OCI-LY7 (cell line): ENCODE measurements at regions of chr12 and their contacts with region 1.

Region 1: DNA sequence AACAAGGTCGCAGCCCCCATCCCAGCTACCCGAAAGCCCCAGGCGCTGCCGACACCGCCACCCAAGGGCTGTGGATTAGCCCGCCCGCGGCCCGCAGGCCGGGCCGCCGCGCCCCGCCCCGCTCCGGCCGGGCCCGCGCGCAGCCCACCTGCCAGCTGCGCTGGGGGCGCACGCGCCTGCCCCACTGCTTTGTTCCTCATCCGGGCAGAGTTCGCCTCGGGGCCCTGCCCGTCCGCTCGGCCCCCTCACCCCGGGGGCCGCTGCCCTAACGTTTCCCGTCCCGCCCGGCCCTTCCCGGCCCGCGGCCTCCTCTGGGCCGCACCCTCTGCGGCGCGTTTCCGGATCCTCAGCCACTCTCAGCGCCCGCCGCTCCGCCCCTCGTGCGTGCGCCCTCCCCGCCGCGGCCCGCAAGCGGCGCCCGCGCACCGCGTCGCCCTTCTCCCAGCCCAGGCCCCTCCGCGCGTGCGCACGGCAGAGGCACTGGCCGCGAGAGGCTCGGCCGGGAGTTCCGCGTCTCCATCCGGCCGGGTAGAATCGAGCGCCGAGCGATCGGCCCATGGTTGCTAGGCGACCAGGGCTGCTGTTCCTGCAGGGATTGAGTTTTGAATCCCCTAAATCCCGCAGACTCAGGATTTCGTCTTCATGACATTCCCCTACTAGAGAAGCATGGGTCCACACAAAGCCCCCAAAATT is at the start of gene PRDM4:
- DNase-seq: peak; percentile 95
- H3K4me3 ChIP-seq: peak within 1 kb of the TSS; percentile 92
- H3K27ac ChIP-seq: peak within 1 kb of the TSS; percentile 20
- H3K4me1 ChIP-seq: peaks cover 24% of the 10 kb centered on the region
- CTCF ChIP-seq: peak; percentile 48
- total RNA-seq, gene PRDM4: 25.1 and 28.7 TPM in 2 replicates

Region 2: DNA sequence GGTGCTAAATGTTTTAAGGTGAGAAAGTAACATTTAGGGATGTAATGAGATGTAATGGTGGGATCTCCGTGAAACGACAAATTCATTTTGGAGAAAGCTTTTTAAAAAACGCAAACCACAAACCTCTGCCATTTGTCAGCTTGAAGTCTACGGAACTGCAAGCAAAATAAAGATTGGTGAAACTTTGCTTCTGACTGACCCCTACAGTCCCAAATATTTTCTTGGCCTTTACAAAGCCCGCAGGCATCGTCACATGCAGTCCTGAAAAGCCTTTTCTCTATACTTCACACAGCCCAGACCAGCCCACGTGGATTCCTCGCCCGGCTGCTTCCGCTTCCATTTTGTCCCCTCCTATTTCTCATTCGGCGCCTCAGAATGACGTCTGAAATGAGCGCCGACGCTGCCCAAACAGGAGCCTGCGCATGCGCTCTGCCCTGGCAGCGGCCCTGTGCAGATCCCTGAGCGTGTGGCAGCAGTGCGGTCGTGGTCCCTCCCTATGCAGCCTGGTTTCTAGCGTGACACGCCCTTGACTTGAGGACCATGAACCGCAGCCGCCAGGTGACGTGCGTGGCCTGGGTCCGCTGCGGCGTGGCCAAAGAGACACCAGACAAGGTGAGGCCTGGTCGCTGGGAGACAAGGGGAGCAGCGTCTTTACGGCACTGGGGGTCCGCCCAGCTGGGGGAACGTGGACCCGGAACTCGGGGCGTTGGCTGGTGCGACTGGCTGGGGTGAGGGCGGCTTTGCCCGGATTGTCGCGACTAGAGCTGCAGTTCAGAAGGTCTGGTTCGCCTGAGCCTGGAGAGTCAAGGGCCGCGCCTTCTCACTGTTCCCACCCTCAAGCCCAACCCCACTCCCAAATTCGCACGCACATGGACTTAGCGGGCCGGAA is 75.4 kb before region 1 on chr12 and contains the start of gene PWP1:
- CTCF ChIA-PET with region 1: no interaction called
- POLR2A ChIA-PET with region 1: no interaction called
- intact Hi-C with region 1: loop called (anchors 5 kb)
- DNase-seq: peak; percentile 97
- H3K4me3 ChIP-seq: peak within 1 kb of the TSS; percentile 95
- H3K27ac ChIP-seq: peak within 1 kb of the TSS; percentile 44
- H3K4me1 ChIP-seq: peaks cover 19% of the 10 kb centered on the region
- CTCF ChIP-seq: no peak
- total RNA-seq, gene PWP1: 28.2 and 46.1 TPM in 2 replicates

Region 3: GRCh38 chr12:107736914-107737313 is 24.0 kb before region 1 on chr12:
- CTCF ChIA-PET with region 1: no interaction called
- POLR2A ChIA-PET with region 1: interaction called, 3 read pairs
- intact Hi-C with region 1: loop called (anchors 1 kb)
- DNase-seq: peak; percentile 86
- H3K4me3 ChIP-seq: peak overlapping the region; percentile 7
- H3K27ac ChIP-seq: peak overlapping the region; percentile 32
- H3K4me1 ChIP-seq: peaks cover 21% of the 10 kb centered on the region
- CTCF ChIP-seq: peak; percentile 70

Region 4: GRCh38 chr12:107748472-107748871 is 12.5 kb before region 1 on chr12:
- CTCF ChIA-PET with region 1: no interaction called
- POLR2A ChIA-PET with region 1: interaction called, 12 read pairs
- intact Hi-C with region 1: no loop called
- DNase-seq: no peak
- H3K4me3 ChIP-seq: no peak overlapping the region
- H3K27ac ChIP-seq: no peak overlapping the region
- H3K4me1 ChIP-seq: no peaks in the 10 kb centered on the region
- CTCF ChIP-seq: no peak

Region 5: GRCh38 chr12:107864235-107864634 is 103.3 kb after region 1 on chr12:
- CTCF ChIA-PET with region 1: no interaction called
- POLR2A ChIA-PET with region 1: no interaction called
- intact Hi-C with region 1: no loop called
- DNase-seq: no peak
- H3K4me3 ChIP-seq: no peak overlapping the region
- H3K27ac ChIP-seq: no peak overlapping the region
- H3K4me1 ChIP-seq: no peaks in the 10 kb centered on the region
- CTCF ChIP-seq: no peak

Region 6: GRCh38 chr12:107884769-107885694 is 124.1 kb after region 1 on chr12:
- CTCF ChIA-PET with region 1: no interaction called
- POLR2A ChIA-PET with region 1: interaction called, 3 read pairs
- intact Hi-C with region 1: loop called (anchors 1 kb)
- DNase-seq: peak; percentile 68
- H3K4me3 ChIP-seq: no peak overlapping the region
- H3K27ac ChIP-seq: no peak overlapping the region
- H3K4me1 ChIP-seq: no peaks in the 10 kb centered on the region
- CTCF ChIP-seq: peak; percentile 91

Region 7: GRCh38 chr12:107903341-107904061 is 142.5 kb after region 1 on chr12:
- CTCF ChIA-PET with region 1: no interaction called
- POLR2A ChIA-PET with region 1: no interaction called
- intact Hi-C with region 1: loop called (anchors 5 kb)
- DNase-seq: peak; percentile 82
- H3K4me3 ChIP-seq: peak overlapping the region; percentile 67
- H3K27ac ChIP-seq: no peak overlapping the region
- H3K4me1 ChIP-seq: peaks cover 3% of the 10 kb centered on the region
- CTCF ChIP-seq: no peak

Region 8: DNA sequence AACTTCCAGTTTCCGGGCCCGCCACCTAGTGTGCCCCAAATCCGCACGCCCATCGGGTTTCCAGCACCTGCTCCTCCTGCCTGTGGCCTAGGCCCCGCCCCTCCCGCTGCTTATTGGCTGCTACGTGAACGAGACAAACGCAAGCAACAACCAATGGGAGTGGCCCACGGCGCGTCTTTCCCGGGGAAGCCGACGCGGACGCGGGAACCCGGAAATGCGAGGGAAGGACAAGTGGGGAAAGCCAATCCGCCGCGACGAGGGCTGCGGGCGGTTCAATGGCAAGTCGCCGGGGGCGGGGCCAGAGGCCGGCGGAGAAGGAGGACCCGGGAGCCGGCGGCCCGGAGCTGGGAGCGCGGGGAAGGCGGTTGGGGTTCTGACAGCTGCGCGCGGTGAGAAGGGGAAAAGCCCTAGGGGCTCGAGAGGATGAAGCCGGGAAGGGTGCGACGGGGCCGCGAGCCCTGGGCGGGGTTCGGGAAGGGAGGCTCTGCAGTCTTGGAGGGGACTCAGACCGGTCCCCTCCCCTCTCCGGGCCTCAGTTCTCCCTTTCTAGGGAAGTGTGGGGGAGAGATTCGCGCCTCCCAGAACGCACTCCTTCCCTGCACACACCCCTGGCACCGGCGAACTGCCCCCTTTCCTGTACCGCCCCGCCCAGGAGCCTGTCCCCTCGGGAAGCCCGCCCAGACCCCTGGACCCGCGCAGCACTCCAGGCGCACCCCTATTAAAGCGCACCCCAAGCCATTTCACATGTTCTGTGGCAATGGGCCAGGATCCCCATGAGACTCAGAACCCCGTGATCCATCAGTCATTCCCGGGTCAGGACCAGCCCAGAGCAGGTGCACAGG is 754.2 kb after region 1 on chr12 and contains the start of gene FICD:
- CTCF ChIA-PET with region 1: no interaction called
- POLR2A ChIA-PET with region 1: interaction called, 6 read pairs
- intact Hi-C with region 1: loop called (anchors 10 kb)
- DNase-seq: peak; percentile 99
- H3K4me3 ChIP-seq: peak within 1 kb of the TSS; percentile 84
- H3K27ac ChIP-seq: no peak within 1 kb of the TSS
- H3K4me1 ChIP-seq: peaks cover 20% of the 10 kb centered on the region
- CTCF ChIP-seq: no peak
- total RNA-seq, gene FICD: 8.4 and 13.1 TPM in 2 replicates